ENCODE measurements at regions of chr6 and their contacts with region 1.

Region 1: GRCh38 chr6:37691904-37692806 is 5.5 kb downstream of the MDGA1 start:
- DNase-seq: peak; percentile 94
- H3K4me3 Mint-ChIP-seq: no peak overlapping the region
- H3K27ac Mint-ChIP-seq: no peak overlapping the region
- H3K4me1 Mint-ChIP-seq: peaks cover 18% of the 10 kb centered on the region
- H3K27me3 Mint-ChIP-seq: peaks cover 39% of the 10 kb centered on the region

Region 2: DNA sequence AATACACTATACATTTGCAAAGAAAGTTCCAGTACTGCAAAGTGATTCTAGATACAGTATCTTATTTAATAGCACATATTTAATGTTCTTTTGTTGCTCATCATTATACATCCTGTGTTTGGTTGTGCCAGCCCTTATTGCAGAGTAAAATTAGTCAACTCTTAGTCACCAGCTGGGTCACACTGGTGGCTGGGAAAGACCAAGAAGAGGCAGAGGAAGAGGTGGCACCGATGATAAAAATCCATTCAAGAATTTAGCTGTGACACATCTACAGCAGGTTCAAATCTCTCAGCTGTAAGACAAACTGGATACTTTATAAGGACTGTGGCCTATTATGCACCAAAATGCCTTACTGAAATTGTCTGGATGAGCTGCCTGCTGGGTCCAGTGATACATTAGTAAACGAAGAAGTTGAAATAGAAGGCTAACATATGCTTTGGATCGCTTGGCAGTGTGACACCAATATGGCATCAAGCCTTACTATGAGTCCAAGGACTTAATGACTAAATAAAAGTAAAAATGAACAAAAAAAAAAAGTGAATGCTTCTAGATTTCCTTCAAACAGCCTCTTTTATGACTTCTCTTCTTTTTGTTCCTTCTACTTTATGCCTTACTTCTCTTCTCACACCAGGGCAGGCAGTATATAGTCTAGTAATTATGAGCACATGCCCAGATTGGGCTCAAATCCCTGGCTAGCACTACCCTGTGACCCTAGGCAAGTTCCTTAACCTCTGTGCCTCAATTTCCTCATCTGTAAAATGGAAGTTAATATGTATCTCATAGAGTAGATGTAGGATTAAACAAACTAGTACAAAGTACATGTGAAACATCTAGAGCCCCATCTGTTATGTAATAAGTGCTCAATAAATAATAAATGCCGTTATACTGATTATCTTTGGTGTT is 367.8 kb before region 1 on chr6:
- intact Hi-C with region 1: loop called (anchors 1 kb)
- DNase-seq: no peak
- H3K4me3 Mint-ChIP-seq: no peak overlapping the region
- H3K27ac Mint-ChIP-seq: peak overlapping the region; percentile 8
- H3K4me1 Mint-ChIP-seq: peaks cover 17% of the 10 kb centered on the region
- H3K27me3 Mint-ChIP-seq: no peaks in the 10 kb centered on the region

Region 3: DNA sequence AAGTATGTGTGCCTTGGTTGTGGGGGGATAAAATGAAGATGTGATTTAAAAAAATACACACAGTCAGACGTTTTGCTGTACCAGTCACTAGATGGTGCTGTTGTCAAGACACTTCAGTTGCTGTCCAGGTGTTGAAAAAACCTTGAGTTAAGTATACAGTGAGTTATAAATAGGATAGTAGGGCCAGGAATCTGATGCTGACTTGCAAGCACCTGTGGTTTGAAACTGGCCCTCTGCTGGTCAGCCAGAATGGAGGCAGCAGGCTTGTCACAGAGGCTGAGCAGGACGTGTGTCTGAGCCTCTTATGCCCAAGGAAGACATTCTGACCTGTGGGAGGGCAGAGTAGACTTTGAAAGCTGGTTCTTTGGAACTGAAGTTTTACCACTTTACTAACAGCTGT is 310.6 kb before region 1 on chr6:
- intact Hi-C with region 1: loop called (anchors 2 kb)
- DNase-seq: peak; percentile 79
- H3K4me3 Mint-ChIP-seq: no peak overlapping the region
- H3K27ac Mint-ChIP-seq: no peak overlapping the region
- H3K4me1 Mint-ChIP-seq: no peaks in the 10 kb centered on the region
- H3K27me3 Mint-ChIP-seq: no peaks in the 10 kb centered on the region

Region 4: GRCh38 chr6:37483917-37484785 is 208.0 kb before region 1 on chr6:
- intact Hi-C with region 1: loop called (anchors 2 kb)
- DNase-seq: peak; percentile 92
- H3K4me3 Mint-ChIP-seq: no peak overlapping the region
- H3K27ac Mint-ChIP-seq: no peak overlapping the region
- H3K4me1 Mint-ChIP-seq: peaks cover 9% of the 10 kb centered on the region
- H3K27me3 Mint-ChIP-seq: no peaks in the 10 kb centered on the region

Region 5: GRCh38 chr6:38493931-38494547 is 801.9 kb after region 1 on chr6:
- intact Hi-C with region 1: loop called (anchors 1 kb)
- DNase-seq: peak; percentile 93
- H3K4me3 Mint-ChIP-seq: no peak overlapping the region
- H3K27ac Mint-ChIP-seq: no peak overlapping the region
- H3K4me1 Mint-ChIP-seq: peaks cover 4% of the 10 kb centered on the region
- H3K27me3 Mint-ChIP-seq: no peaks in the 10 kb centered on the region

Region 6: DNA sequence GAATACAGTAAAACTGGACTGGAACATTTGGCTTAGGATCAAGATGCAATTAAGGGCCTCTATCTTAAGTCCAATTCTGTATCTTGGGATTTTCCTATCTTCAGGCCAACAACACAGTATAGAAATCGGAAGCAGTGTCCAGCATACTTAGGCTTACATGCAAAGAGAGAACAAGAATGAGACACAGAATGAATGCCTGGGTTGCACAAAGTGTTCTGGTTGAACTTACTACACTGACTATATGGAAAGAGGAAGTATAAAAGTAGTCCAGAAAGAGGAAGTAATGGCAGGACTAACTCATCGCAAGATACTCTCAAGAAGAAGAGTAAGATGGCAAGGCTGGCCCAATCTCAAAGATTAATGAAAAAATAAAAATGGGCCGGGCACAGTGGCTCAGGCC is 860.0 kb after region 1 on chr6:
- intact Hi-C with region 1: no loop called
- DNase-seq: no peak
- H3K4me3 Mint-ChIP-seq: no peak overlapping the region
- H3K27ac Mint-ChIP-seq: no peak overlapping the region
- H3K4me1 Mint-ChIP-seq: peaks cover 3% of the 10 kb centered on the region
- H3K27me3 Mint-ChIP-seq: no peaks in the 10 kb centered on the region